Ascending aorta (tissue), 2 donors: ENCODE measurements at regions of chr6 and their contacts with region 1.

Region 1: GRCh38 chr6:135497412-135498269 is at the start of gene AHI1:
- DNase-seq: peak; percentile 73 to 97
- H3K4me3 ChIP-seq: peak within 1 kb of the TSS; percentile 93 to 96
- H3K27ac ChIP-seq: peak within 1 kb of the TSS; percentile 97 to 98
- H3K4me1 ChIP-seq: peaks cover 0 to 2% of the 10 kb centered on the region in 2 donors
- H3K27me3 ChIP-seq: no peaks in the 10 kb centered on the region
- CTCF ChIP-seq: peak in 2 of 3 experiments; percentile 4 to 25
- total RNA-seq, gene AHI1: 5.4 TPM

Region 2: DNA sequence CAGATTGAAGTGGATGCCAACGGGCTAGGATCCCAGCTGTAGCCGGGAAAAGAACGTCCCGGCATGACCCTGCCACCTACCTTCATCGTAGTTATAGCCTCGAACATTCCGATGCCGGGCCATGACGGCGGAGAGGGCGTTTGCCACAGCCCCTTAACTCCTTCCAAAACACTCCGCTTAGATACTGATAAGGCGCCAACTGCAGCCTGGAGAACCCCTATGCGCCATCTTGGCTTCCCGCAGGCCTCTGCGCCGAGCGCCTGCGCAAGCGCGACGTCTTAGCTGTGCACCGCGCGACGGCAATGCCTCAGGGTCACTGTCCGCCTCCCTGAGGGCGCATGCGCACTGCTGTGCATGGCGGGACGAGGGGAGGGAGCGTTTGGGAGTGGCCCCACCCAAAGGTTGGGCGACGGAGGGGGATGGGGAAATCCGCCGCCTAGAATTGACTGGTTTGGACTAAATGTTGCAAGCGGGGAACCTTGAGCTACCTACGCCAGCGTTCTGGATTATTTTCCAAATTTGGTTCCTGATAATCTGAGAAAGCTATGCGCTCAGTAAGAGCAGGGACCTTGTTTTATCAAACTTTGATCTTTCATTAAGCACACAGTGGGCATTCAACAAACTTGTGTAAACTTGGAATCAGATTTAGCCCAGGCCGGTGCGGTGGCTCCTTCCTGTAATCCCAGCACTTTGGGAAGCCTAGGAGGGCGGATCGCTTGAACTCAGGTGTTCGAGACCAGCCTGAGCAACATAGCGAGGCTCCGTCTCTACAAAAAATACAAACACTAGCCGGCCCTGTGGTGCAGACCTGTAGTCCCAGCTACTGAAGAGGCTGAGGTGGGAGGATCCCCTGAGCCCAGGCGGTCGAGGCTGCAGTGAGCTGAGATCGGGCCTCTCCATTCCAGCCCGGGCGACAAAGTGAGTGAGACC is 442.8 kb before region 1 on chr6 and contains the start of gene HBS1L:
- intact Hi-C with region 1: loop called (anchors 10 kb)
- DNase-seq: peak; percentile 84 to 98
- H3K4me3 ChIP-seq: peak within 1 kb of the TSS; percentile 87 to 94
- H3K27ac ChIP-seq: peak within 1 kb of the TSS; percentile 87 to 90
- H3K4me1 ChIP-seq: no peaks in the 10 kb centered on the region
- H3K27me3 ChIP-seq: no peaks in the 10 kb centered on the region
- CTCF ChIP-seq: no peak
- total RNA-seq, gene HBS1L: 9.8 TPM

Region 3: DNA sequence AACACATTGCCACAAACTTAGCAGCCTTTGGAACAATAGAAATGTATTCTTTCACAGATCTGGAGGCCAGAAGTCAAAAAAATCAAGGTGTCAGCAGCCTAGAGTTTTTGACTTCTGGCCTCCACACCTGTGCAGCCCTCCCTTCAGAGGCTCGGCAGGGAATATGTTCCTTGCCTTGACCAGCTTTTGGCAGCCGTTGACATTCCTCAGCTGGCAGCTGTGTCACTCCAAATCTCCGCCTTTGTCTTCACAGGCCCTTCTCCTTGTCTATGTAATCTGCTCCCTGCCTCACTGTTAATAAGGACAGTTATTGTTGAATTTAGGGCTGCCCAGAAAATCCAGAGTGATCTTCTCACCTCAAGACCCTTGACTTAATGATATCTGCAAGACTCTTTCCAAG is 17.1 kb after region 1 on chr6:
- intact Hi-C with region 1: no loop called
- DNase-seq: no peak
- H3K4me3 ChIP-seq: no peak overlapping the region
- H3K27ac ChIP-seq: no peak overlapping the region
- H3K4me1 ChIP-seq: no peaks in the 10 kb centered on the region
- H3K27me3 ChIP-seq: no peaks in the 10 kb centered on the region
- CTCF ChIP-seq: no peak

Region 4: GRCh38 chr6:135738636-135739035 is 241.0 kb after region 1 on chr6:
- intact Hi-C with region 1: no loop called
- DNase-seq: no peak
- H3K4me3 ChIP-seq: no peak overlapping the region
- H3K27ac ChIP-seq: no peak overlapping the region
- H3K4me1 ChIP-seq: no peaks in the 10 kb centered on the region
- H3K27me3 ChIP-seq: no peaks in the 10 kb centered on the region
- CTCF ChIP-seq: no peak

Region 5: GRCh38 chr6:136249811-136250685 is 752.4 kb after region 1 on chr6 and contains the start of gene MTFR2:
- intact Hi-C with region 1: loop called (anchors 2 kb)
- DNase-seq: peak; percentile 95 to 98
- H3K4me3 ChIP-seq: peak within 1 kb of the TSS; percentile 84 to 88
- H3K27ac ChIP-seq: no peak within 1 kb of the TSS
- H3K4me1 ChIP-seq: peaks cover 5 to 11% of the 10 kb centered on the region in 2 donors
- H3K27me3 ChIP-seq: no peaks in the 10 kb centered on the region
- CTCF ChIP-seq: no peak
- total RNA-seq, gene MTFR2: not detected

Region 6: DNA sequence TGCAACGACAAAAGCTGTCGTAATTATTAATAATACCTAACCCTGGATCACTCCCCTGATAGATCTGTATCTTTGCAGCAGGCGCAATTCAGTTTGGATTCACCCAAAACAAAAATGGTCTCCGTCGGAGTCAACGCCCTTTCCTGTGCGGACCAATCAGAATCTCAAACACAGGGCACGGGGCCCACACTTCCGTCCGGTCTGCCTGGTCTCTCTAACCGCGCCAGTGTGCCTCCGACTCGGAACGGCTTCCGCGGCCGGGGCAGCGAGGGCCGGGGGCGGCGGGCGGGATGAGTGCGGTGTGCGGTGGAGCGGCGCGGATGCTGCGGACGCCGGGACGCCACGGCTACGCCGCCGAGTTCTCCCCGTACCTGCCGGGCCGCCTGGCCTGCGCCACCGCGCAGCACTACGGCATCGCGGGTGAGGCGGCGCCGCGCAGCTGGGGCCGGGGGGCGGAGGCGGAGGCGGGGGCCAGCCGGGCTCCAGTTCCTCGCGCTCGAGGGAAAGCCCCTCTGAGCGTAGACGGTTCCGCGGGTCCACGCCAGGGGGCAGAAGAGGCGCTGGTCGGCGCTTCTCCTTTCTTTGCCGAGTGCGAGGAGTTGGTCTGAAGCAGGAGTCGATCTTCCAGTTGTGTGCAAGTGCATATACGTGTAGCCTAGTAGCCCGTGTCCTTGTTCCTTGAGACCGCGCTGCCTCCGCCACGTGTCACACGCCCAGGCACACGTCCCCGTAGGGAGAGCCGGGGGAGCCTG is 1324.9 kb after region 1 on chr6 and contains the start of gene PEX7:
- intact Hi-C with region 1: loop called (anchors 5 kb)
- DNase-seq: peak; percentile 47 to 93
- H3K4me3 ChIP-seq: peak within 1 kb of the TSS; percentile 73 to 95
- H3K27ac ChIP-seq: peak within 1 kb of the TSS; percentile 88 to 97
- H3K4me1 ChIP-seq: no peaks in the 10 kb centered on the region
- H3K27me3 ChIP-seq: no peaks in the 10 kb centered on the region
- CTCF ChIP-seq: peak; percentile 42 to 57 (median 56)
- total RNA-seq, gene PEX7: 10.5 TPM

Region 7: DNA sequence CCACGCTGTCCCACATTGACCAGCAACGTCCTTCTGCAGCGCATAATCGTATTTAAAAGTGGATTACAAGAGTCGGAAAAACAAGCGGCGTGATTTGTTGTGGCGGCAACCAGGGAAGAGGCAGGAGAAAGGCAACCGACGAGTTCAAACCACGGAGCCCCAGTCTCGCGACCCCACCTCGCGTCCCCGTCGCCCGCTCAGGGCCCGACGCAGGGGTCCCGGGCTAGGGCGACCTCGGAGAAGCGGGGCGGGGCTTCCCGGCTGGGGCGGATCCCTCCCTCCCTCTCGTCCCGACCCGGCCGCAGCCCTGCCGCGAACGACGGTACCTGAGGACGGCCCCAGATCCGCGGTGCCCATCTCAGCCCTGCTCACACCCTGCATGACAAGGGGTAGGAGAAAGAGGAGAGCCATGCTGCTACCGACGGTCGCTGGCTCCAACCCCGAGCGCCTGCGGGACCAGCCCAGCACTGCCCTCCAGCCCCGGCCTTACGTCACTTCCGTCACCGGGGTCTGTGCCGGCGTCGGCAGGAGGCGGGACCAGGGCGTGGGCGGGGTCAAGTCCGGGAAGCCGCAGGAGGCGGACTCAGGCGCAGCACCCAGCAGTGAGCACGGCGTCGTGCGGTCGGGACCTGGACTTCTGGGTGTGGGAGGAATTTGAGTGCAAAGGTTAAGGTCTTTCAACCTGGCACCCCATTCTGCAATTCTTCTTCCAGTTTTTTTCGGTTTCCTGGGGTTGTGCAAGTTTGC is 1721.4 kb after region 1 on chr6 and contains the start of gene IFNGR1:
- intact Hi-C with region 1: loop called (anchors 10 kb)
- DNase-seq: peak; percentile 82 to 98
- H3K4me3 ChIP-seq: peak within 1 kb of the TSS; percentile 87 to 93
- H3K27ac ChIP-seq: peak within 1 kb of the TSS; percentile 99
- H3K4me1 ChIP-seq: peaks cover 6 to 46% of the 10 kb centered on the region in 2 donors
- H3K27me3 ChIP-seq: no peaks in the 10 kb centered on the region
- CTCF ChIP-seq: peak in 1 of 3 experiments; percentile 2
- total RNA-seq, gene IFNGR1: 47.7 TPM